ENCODE measurements at regions of chr5 and their contacts with region 1.

Region 1: GRCh38 chr5:90264689-90265544 is 144.6 kb downstream of the CETN3 start:
- DNase-seq: peak; percentile 43 to 84 (median 66)
- H3K4me3 ChIP-seq: peak overlapping the region in 29 of 59 donors; percentile 1 to 50 (median 21)
- H3K27ac ChIP-seq: peak overlapping the region in 34 of 59 donors; percentile 0 to 76 (median 23)
- H3K27me3 ChIP-seq: no peaks in the 10 kb centered on the region
- CTCF ChIP-seq: peak; percentile 77 to 98 (median 92)

Region 2: GRCh38 chr5:88736494-88736893 is 1528.4 kb before region 1 on chr5:
- intact Hi-C with region 1: loop called (anchors 5 kb)
- DNase-seq: no peak
- H3K4me3 ChIP-seq: no peak overlapping the region
- H3K27ac ChIP-seq: peak overlapping the region in 27 of 59 donors; percentile 2 to 66 (median 30)
- H3K27me3 ChIP-seq: no peaks in the 10 kb centered on the region
- CTCF ChIP-seq: no peak

Region 3: GRCh38 chr5:90390928-90391327 is 126.0 kb after region 1 on chr5:
- intact Hi-C with region 1: loop called in 1 of 2 experiments (anchors 5 kb)
- DNase-seq: no peak
- H3K4me3 ChIP-seq: peak overlapping the region in 1 of 59 donors; percentile 1
- H3K27ac ChIP-seq: peak overlapping the region in 3 of 59 donors; percentile 13 to 53 (median 22)
- H3K27me3 ChIP-seq: no peaks in the 10 kb centered on the region
- CTCF ChIP-seq: no peak

Measured in dorsolateral prefrontal cortex (tissue), 120 donors.